K562 (cell line): ENCODE measurements at regions of chr21 and their contacts with region 1.

Region 1: GRCh38 chr21:42878993-42879787 is at the start of gene WDR4:
- DNase-seq: peak; percentile 99 to 100 (median 100)
- ATAC-seq: peak; percentile 96
- H3K4me3 ChIP-seq: peak within 1 kb of the TSS; percentile 76
- H3K27ac ChIP-seq: peak within 1 kb of the TSS; percentile 91
- H3K4me1 ChIP-seq: peaks cover 0 to 11% of the 10 kb centered on the region in 2 experiments; a peak in 2 of 5 replicates
- H3K27me3 ChIP-seq: no peaks in the 10 kb centered on the region
- CTCF ChIP-seq: peak in 1 of 3 experiments; percentile 5; a peak in 1 of 6 replicates
- EP300 ChIP-seq: no peak
- POLR2A ChIP-seq: peak; percentile 97
- RAD21 ChIP-seq: no peak
- polyA plus RNA-seq, gene WDR4: 5.4 to 26.3 TPM

Region 2: DNA sequence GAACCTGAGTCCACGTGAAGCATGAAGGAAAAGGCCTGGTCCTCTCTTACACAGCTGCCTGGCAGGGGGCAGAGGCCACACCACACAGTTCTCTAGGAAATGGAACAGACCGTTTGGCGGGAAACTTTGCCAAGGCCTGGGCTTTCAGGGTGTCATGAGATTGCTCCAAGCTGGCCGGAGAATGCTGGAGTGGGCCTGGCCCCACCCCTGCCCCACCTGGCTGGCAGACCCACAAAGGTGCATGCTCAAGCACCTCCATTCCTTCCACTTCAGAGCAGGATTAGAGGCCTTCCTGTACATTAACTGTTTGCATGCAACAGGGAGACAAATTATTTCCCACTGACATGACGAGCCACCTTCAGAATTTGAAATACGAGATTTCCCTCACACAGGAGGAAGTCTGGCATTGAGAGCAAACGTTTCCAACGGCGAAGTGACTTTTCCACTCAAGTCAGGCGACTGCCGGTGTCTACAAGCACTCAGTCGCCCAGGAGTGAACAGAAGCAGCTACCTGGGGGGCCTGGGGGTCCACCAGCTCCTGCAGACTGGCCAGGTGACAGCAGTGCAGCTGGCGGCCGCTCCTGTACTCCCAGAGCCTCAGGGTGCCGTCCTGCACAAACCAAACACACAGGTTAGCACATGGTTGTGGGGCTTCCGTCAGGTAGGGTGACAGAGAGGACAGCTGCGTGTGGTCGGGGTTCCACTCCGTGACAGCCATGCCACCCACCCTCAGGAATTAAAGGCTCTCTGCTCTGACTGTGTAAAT is 23.8 kb before region 1 on chr21:
- CTCF ChIA-PET with region 1: no interaction called
- POLR2A ChIA-PET with region 1: no interaction called
- in situ Hi-C with region 1: no loop called
- intact Hi-C with region 1: no loop called
- DNase-seq: no peak
- ATAC-seq: no peak
- H3K4me3 ChIP-seq: no peak overlapping the region
- H3K27ac ChIP-seq: no peak overlapping the region
- H3K4me1 ChIP-seq: peaks cover 0 to 29% of the 10 kb centered on the region in 2 experiments; a peak in 1 of 5 replicates
- H3K27me3 ChIP-seq: no peaks in the 10 kb centered on the region
- CTCF ChIP-seq: no peak
- EP300 ChIP-seq: no peak
- POLR2A ChIP-seq: no peak
- RAD21 ChIP-seq: no peak

Region 3: GRCh38 chr21:42868196-42868595 is 11.0 kb before region 1 on chr21:
- CTCF ChIA-PET with region 1: no interaction called
- POLR2A ChIA-PET with region 1: interaction called, 10 read pairs
- in situ Hi-C with region 1: no loop called
- intact Hi-C with region 1: no loop called
- DNase-seq: peak in 1 of 4 experiments; percentile 13
- ATAC-seq: no peak
- H3K4me3 ChIP-seq: no peak overlapping the region
- H3K27ac ChIP-seq: no peak overlapping the region
- H3K4me1 ChIP-seq: peaks cover 0 to 18% of the 10 kb centered on the region in 2 experiments; a peak in 2 of 5 replicates
- H3K27me3 ChIP-seq: no peaks in the 10 kb centered on the region
- CTCF ChIP-seq: no peak
- EP300 ChIP-seq: no peak
- POLR2A ChIP-seq: no peak; the same call in 1 of the 2 replicates
- RAD21 ChIP-seq: no peak

Region 4: DNA sequence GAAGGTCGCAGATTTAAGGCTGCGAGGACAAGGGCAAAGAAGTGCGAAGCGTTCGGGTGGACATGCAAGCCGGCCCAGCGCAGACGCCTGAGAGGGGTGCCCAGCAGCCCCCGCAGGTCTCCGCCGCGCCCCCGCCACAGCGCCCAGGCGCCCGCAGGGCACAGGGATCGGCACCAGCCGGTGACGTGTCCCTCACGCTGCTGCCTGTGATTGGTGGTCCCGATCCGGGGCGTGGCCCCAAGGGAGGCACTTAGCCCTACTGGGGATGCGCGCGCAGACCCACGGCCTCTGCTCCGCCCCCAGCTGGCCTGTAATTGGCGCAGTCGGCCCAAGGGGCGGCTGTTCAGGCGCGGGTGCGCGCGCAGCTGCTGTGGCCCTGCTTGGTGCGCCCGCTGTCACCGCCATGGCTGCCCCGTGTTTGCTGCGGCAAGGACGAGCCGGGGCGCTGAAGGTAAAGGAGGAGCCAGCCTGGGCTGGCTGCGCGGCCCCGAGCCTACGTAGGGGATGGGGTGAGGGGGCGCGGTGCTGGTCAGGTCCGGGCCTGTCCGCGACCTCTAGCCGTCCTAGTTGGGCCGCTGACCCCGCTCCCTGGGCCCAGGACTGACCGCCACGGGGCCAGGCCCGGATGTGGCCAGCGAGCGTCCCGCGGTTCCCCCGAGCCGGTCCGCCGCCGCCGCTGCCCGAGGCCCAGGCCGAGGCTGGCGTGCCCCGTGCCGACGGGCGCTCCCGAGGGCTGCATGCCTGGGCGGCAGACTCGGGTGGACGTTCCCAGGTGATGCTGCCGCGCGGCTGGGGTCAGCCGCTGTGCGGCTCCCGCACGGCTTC is 14.0 kb after region 1 on chr21 and contains the start of gene NDUFV3:
- CTCF ChIA-PET with region 1: no interaction called
- POLR2A ChIA-PET with region 1: interaction called, 22 read pairs
- in situ Hi-C with region 1: no loop called
- intact Hi-C with region 1: no loop called
- DNase-seq: peak; percentile 99 to 100 (median 100)
- ATAC-seq: peak; percentile 97
- H3K4me3 ChIP-seq: peak within 1 kb of the TSS; percentile 88
- H3K27ac ChIP-seq: peak within 1 kb of the TSS; percentile 75
- H3K4me1 ChIP-seq: peaks cover 10 to 11% of the 10 kb centered on the region in 2 experiments; a peak in 4 of 5 replicates
- H3K27me3 ChIP-seq: no peaks in the 10 kb centered on the region
- CTCF ChIP-seq: no peak
- EP300 ChIP-seq: no peak
- POLR2A ChIP-seq: peak; percentile 99
- RAD21 ChIP-seq: peak in 1 of 2 experiments; percentile 4; a peak in 1 of 4 replicates
- polyA plus RNA-seq, gene NDUFV3: 19.1 to 23.6 TPM

Region 5: DNA sequence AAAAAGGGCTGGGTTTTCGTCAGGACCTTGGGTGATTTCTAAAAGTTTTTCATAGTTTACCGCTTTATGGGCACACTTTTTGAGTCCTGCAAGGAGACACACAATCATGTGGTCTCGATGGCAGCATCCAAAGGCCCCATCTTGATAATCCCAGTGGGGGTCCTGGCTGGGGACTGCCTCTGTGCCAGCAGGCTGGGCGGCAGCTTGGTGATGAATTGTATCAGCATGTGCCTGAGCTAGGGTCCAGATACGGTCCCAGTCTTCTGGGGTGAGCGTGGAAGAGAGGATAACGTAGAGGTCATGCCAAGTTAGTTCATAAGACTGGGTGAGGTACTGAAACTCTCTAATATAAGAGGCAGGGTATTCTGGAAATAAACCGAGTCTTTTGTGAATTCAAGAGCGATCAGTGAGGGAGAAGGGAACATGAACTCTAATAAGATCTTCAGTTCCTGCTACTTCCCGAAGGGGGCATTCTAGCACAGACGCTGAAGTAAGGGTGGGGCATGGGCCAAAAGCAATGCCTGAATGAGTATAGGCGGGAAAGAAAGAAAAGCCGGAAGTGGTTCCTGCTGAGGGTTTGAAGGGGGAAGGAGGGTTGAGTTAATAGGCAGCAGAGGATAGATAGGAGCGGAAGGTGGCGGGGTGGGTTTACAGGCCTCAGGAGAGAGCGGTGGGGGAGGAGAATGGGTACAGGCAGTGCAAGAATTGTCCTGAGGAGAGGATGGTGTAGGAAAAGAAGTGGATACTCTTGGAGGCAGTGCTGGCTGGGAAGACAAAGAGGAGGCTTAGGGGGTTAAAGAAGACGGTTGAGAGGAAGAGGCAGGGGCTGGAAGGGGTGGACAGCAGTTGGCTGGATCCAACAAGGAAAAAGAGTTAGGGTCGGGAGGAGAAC is 44.6 kb after region 1 on chr21:
- CTCF ChIA-PET with region 1: no interaction called
- POLR2A ChIA-PET with region 1: interaction called, 3 read pairs
- in situ Hi-C with region 1: no loop called
- intact Hi-C with region 1: loop called (anchors 5 kb)
- DNase-seq: peak; percentile 90 to 98 (median 94)
- ATAC-seq: peak; percentile 97
- H3K4me3 ChIP-seq: no peak overlapping the region
- H3K27ac ChIP-seq: peak overlapping the region; percentile 79
- H3K4me1 ChIP-seq: peaks cover 30 to 36% of the 10 kb centered on the region in 2 experiments
- H3K27me3 ChIP-seq: no peaks in the 10 kb centered on the region
- CTCF ChIP-seq: peak; percentile 89 to 97 (median 93)
- EP300 ChIP-seq: peak; percentile 69
- POLR2A ChIP-seq: peak; percentile 82
- RAD21 ChIP-seq: peak; percentile 99